AG04449 (cell line): ENCODE measurements at regions of chr6 and their contacts with region 1.

Region 1: GRCh38 chr6:11496152-11497060 is 41.1 kb upstream of the TMEM170B start:
- DNase-seq: peak; percentile 37
- H3K4me3 ChIP-seq: no peak overlapping the region
- CTCF ChIP-seq: peak; percentile 68

Region 2: DNA sequence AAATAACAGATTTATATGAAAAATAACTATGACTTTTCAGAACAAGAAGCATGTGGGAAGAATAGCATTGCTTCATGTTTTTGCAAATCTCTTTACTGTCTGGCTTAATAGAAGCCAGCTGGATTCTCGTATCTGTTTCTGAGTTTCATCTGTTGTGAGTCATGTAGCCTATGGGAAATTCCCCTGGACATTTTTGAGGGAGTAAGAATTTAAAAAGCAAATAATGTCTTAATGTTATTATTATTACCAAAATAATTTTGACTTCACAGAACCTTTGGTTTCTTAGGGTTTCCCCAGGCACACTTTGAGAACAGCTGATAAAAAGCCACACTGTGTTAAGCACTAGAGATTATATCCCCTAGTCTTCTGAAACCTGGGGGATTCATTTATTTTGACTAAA is 533.7 kb before region 1 on chr6:
- CTCF ChIA-PET with region 1: interaction called, 14 read pairs
- POLR2A ChIA-PET with region 1: no interaction called
- DNase-seq: peak; percentile 83
- H3K4me3 ChIP-seq: no peak overlapping the region
- CTCF ChIP-seq: no peak

Region 3: GRCh38 chr6:11101417-11101816 is 395.0 kb before region 1 on chr6:
- CTCF ChIA-PET with region 1: interaction called, 22 read pairs
- POLR2A ChIA-PET with region 1: no interaction called
- DNase-seq: no peak
- H3K4me3 ChIP-seq: no peak overlapping the region
- CTCF ChIP-seq: no peak

Region 4: GRCh38 chr6:11144393-11144851 is 352.0 kb before region 1 on chr6:
- CTCF ChIA-PET with region 1: interaction called, 167 read pairs
- POLR2A ChIA-PET with region 1: no interaction called
- DNase-seq: no peak
- H3K4me3 ChIP-seq: no peak overlapping the region
- CTCF ChIP-seq: peak; percentile 86

Region 5: DNA sequence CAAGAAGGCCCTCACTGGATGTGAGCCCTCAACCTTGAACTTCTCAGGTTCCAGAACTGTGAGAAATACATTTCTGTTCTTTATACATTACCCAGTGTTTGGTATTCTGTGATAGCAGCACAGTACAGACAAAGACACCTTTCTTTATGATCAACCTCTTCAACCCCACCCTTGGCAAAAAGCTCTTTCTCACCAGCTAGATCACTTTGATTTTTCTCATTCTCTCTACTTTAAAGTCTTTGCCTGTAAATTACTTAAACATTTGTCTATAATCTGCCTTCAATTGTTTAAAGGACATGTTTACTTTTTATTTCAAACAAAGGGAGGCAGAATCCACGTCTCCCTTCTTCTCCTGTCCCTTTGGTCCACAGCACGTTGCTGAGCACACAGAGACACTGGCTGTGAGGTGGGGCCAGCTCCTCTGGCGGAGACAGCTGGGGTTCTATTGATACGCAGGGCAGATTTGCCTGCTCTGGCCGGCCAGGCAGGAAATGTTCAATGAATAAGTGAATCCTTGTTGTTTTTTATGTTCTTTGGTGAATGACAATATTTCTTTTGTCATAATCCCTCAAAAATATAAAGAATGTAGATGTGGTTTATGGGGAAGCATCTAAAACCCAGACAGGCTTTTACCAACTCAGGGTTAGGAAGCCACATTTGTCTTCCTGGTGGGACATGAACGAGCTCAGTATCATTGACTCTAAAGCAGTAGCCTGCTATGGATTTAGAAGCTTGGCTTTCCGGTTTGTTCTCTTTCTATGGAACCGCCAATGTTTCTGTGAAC is 316.8 kb before region 1 on chr6:
- CTCF ChIA-PET with region 1: interaction called, 115 read pairs
- POLR2A ChIA-PET with region 1: no interaction called
- DNase-seq: no peak
- H3K4me3 ChIP-seq: no peak overlapping the region
- CTCF ChIP-seq: no peak

Region 6: DNA sequence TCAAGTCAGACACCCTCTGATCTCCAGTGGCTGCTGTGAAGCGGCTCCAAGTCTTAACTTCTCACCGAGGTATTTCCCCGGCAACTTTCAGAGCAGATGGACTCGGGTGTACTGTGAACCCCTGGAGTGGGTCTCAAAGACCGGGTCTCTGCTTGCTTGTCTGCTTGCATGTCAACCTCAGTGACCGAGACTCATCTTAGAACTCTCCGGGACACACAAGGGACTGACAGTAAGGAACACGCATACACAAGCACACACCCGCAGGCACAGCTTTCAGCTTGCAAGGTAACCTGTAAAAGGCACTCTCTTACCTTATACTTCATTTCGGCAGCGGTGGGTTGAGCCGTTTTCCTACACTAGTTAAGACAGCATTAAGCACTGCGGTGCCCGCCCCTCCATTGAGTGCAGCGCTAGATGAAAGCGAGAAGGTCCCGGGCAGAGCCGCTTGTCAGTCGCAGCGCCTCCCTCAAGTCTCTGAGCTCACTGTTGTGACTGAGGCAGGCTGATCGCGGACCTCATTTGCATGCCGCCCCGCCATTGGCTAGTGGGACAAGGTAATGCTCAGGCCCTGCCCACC is 264.1 kb before region 1 on chr6 and contains the start of gene NEDD9:
- CTCF ChIA-PET with region 1: interaction called, 55 read pairs
- POLR2A ChIA-PET with region 1: interaction called, 11 read pairs
- DNase-seq: peak; percentile 79
- H3K4me3 ChIP-seq: peak within 1 kb of the TSS; percentile 85
- CTCF ChIP-seq: no peak

Region 7: GRCh38 chr6:11485271-11485670 is 11.1 kb before region 1 on chr6:
- CTCF ChIA-PET with region 1: interaction called, 36 read pairs
- POLR2A ChIA-PET with region 1: interaction called, 3 read pairs
- DNase-seq: no peak
- H3K4me3 ChIP-seq: no peak overlapping the region
- CTCF ChIP-seq: no peak